A549 (cell line): ENCODE measurements at regions of chr9 and their contacts with region 1.

Region 1: DNA sequence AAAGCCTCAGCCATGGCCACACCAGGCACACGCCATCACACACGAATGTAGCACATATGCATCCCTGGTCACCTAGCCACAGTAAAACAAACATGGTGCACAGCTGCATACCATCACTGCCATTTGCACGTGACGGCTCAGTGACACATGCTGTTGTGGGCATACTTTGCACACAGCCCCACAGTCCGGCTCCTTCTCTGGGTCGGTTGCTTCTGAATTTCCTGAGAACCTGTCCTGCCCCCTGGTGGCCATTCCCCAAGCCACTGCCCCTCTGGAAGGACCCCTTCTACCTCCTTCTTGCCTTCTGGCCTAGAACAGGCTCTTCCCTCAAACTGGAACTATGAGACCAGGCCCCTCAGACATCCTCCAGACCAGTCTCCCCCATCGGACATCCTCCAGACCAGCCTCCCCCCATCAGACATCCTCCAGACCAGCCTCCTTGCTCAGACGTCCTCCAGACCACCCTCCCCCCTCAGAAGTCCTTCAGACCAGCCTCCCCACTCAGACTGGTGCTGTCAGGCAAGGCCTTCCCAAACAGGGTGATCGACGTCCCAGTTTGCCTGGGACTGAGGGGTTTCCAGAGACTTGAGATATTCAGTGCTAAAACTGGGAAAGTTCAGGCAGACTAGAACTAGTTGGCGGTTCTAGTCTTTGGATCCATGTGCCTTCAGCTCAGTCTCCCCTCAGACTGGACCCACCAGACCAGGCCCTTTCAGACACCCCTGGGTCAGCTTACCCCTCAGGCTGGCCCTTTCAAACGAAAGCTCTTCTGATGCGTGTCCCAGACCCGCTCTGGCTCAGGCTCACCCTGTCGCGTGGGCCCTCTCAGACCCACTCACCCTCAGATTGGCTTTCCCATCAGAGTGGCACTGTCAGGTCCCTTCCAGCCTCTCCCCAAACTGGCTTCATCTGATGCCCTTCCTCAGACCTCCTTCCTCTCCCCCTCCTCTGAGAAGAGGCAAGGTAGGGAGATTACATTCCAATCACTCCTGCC is 24.3 kb upstream of the ENHO start:
- DNase-seq: peak; percentile 66 to 78
- ATAC-seq: peak; percentile 83 to 91
- H3K4me3 ChIP-seq: no peak overlapping the region
- H3K27ac ChIP-seq: no peak overlapping the region
- H3K4me1 ChIP-seq: peaks cover 9% of the 10 kb centered on the region; the same call in 1 of the 3 replicates
- CTCF ChIP-seq: peak; percentile 65
- EP300 ChIP-seq: no peak
- POLR2A ChIP-seq: no peak
- RAD21 ChIP-seq: peak; percentile 61 to 72

Region 2: GRCh38 chr9:34328987-34329832 is 217.9 kb before region 1 on chr9 and contains the starts of genes KIF24 and NUDT2:
- CTCF ChIA-PET with region 1: interaction called, 10 read pairs
- POLR2A ChIA-PET with region 1: no interaction called
- DNase-seq: peak; percentile 96 to 100
- ATAC-seq: peak; percentile 94 to 97
- H3K4me3 ChIP-seq: peak within 1 kb of the TSS; percentile 97
- H3K27ac ChIP-seq: peak within 1 kb of the TSS; percentile 92 to 95
- H3K4me1 ChIP-seq: peaks cover 20% of the 10 kb centered on the region
- CTCF ChIP-seq: no peak
- EP300 ChIP-seq: no peak
- POLR2A ChIP-seq: peak; percentile 77
- RAD21 ChIP-seq: no peak
- polyA plus RNA-seq, gene KIF24: 4.3 and 4.4 TPM in 2 replicates
- polyA plus RNA-seq, gene NUDT2: 26.4 and 26.8 TPM in 2 replicates

Region 3: GRCh38 chr9:34437006-34437925 is 109.9 kb before region 1 on chr9:
- CTCF ChIA-PET with region 1: interaction called, 27 read pairs
- POLR2A ChIA-PET with region 1: no interaction called
- DNase-seq: peak; percentile 51 to 87
- ATAC-seq: peak; percentile 95 to 98
- H3K4me3 ChIP-seq: no peak overlapping the region
- H3K27ac ChIP-seq: no peak overlapping the region
- H3K4me1 ChIP-seq: no peaks in the 10 kb centered on the region
- CTCF ChIP-seq: peak; percentile 87
- EP300 ChIP-seq: no peak
- POLR2A ChIP-seq: no peak
- RAD21 ChIP-seq: peak; percentile 86 to 92

Region 4: DNA sequence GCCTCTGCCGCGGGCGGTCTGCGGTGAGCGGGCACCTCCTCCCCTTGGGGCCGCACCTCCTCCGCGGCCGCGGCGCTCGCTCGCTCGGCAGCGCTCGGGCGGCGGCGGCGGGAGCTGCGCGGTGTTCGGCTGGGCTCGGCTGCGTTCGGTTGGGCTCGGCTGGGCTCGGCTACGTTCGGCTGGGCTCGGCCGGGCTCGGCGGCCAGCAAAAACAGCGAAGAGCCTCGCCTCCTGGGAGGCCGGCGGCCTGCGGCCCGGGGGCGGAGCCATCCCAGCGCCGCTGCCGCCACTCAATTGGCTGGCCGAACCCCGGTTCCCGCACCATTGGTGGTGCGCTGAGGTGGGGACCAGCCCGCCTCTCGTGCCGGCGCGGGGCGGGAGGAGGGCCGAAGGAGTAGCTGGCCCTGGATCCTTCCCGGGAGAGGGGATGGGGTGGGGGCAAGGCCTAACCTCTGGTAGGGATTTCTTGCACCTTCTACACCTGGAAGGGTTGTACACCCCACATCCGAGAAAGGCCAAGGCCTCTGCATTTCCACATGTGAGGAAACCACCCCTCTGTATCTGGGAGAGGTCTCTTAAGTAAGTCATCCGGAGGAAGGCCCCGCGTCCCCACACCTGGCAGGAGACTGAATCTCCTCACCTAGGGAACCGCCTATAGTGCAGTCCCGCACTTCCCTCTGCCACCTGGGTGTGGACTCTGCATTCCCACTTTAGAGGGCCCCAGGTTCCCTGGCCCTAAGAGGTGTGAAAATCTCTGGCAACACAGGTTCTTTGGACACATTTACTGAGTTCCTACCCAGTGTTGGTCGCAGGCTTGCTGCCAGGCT is 23.9 kb before region 1 on chr9 and contains the start of gene ENHO:
- CTCF ChIA-PET with region 1: interaction called, 19 read pairs
- POLR2A ChIA-PET with region 1: no interaction called
- DNase-seq: peak; percentile 83 to 94
- ATAC-seq: peak; percentile 92 to 99
- H3K4me3 ChIP-seq: peak within 1 kb of the TSS; percentile 58
- H3K27ac ChIP-seq: peak within 1 kb of the TSS; percentile 70 to 85
- H3K4me1 ChIP-seq: peaks cover 8% of the 10 kb centered on the region; the same call in 2 of the 3 replicates
- CTCF ChIP-seq: no peak
- EP300 ChIP-seq: no peak
- POLR2A ChIP-seq: peak; percentile 20; the same call in 1 of the 2 replicates
- RAD21 ChIP-seq: no peak
- polyA plus RNA-seq, gene ENHO: 0.28 and 0.32 TPM in 2 replicates

Region 5: GRCh38 chr9:34570376-34570775 is 23.2 kb after region 1 on chr9:
- CTCF ChIA-PET with region 1: interaction called, 168 read pairs
- POLR2A ChIA-PET with region 1: no interaction called
- DNase-seq: no peak
- ATAC-seq: no peak
- H3K4me3 ChIP-seq: no peak overlapping the region
- H3K27ac ChIP-seq: peak overlapping the region in 1 of 2 experiments; percentile 63; a peak in 1 of 6 replicates
- H3K4me1 ChIP-seq: peaks cover 20% of the 10 kb centered on the region
- CTCF ChIP-seq: no peak
- EP300 ChIP-seq: no peak
- POLR2A ChIP-seq: no peak
- RAD21 ChIP-seq: no peak

Region 6: GRCh38 chr9:34675048-34675714 is 128.1 kb after region 1 on chr9:
- CTCF ChIA-PET with region 1: no interaction called
- POLR2A ChIA-PET with region 1: no interaction called
- DNase-seq: peak; percentile 79 to 84
- ATAC-seq: peak; percentile 93 to 99
- H3K4me3 ChIP-seq: no peak overlapping the region
- H3K27ac ChIP-seq: no peak overlapping the region
- H3K4me1 ChIP-seq: no peaks in the 10 kb centered on the region
- CTCF ChIP-seq: peak; percentile 79
- EP300 ChIP-seq: no peak
- POLR2A ChIP-seq: no peak
- RAD21 ChIP-seq: peak; percentile 70 to 88